ENCODE measurements at regions of chr6 and their contacts with region 1.

Region 1: GRCh38 chr6:125995972-125996580 is 9.7 kb downstream of the TRMT11 start:
- DNase-seq: peak; percentile 81
- ATAC-seq: peak; percentile 95
- H3K4me3 Mint-ChIP-seq: peak overlapping the region; percentile 47
- H3K27ac Mint-ChIP-seq: no peak overlapping the region
- H3K4me1 Mint-ChIP-seq: peaks cover 29% of the 10 kb centered on the region
- H3K27me3 Mint-ChIP-seq: no peaks in the 10 kb centered on the region

Region 2: GRCh38 chr6:126170978-126171382 is 174.9 kb after region 1 on chr6:
- CTCF ChIA-PET with region 1: interaction called, 3 read pairs
- POLR2A ChIA-PET with region 1: no interaction called
- intact Hi-C with region 1: loop called (anchors 2 kb)
- DNase-seq: peak; percentile 44
- ATAC-seq: peak; percentile 65
- H3K4me3 Mint-ChIP-seq: no peak overlapping the region
- H3K27ac Mint-ChIP-seq: no peak overlapping the region
- H3K4me1 Mint-ChIP-seq: peaks cover 4% of the 10 kb centered on the region
- H3K27me3 Mint-ChIP-seq: no peaks in the 10 kb centered on the region

Region 3: DNA sequence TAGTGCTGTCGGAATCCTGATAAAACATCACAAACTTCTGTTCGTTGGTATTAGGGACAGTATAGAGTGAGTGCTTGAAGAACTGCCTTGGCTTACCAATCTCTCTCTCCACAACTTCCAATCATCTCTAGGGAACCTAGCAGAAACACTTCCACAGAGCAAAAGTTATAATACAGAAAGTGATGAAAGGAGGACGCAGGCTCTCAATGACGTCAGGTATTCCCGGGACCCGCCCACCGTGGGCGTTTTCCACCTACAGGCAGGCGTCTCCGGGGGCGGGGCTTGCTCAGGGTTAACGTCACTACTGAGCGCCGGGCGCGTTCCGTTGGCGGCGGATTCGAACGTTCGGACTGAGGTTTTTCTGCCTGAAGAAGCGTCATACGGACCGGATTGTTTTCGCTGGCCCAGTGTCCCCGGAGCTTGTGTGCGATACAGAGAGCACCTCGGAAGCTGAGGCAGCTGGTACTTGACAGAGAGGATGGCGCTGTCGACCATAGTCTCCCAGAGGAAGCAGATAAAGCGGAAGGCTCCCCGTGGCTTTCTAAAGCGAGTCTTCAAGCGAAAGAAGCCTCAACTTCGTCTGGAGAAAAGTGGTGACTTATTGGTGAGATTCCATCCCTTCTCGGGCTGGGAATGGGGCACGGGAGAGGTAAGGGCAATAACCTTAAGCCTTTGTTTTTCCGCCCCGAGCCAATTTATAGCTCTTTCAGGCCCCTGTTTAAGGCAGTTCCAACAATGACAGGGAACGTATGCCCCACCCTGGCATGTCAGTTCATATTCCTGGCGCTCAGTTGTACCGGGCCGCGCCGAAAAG is 343.9 kb after region 1 on chr6 and contains the start of gene CENPW:
- CTCF ChIA-PET with region 1: no interaction called
- POLR2A ChIA-PET with region 1: no interaction called
- intact Hi-C with region 1: loop called in 1 of 2 experiments (anchors 10 kb)
- DNase-seq: peak; percentile 97
- ATAC-seq: peak; percentile 92
- H3K4me3 Mint-ChIP-seq: no peak within 1 kb of the TSS
- H3K27ac Mint-ChIP-seq: no peak within 1 kb of the TSS
- H3K4me1 Mint-ChIP-seq: peaks cover 13% of the 10 kb centered on the region
- H3K27me3 Mint-ChIP-seq: no peaks in the 10 kb centered on the region
- total RNA-seq, gene CENPW: 44.1 to 63.6 TPM

Region 4: DNA sequence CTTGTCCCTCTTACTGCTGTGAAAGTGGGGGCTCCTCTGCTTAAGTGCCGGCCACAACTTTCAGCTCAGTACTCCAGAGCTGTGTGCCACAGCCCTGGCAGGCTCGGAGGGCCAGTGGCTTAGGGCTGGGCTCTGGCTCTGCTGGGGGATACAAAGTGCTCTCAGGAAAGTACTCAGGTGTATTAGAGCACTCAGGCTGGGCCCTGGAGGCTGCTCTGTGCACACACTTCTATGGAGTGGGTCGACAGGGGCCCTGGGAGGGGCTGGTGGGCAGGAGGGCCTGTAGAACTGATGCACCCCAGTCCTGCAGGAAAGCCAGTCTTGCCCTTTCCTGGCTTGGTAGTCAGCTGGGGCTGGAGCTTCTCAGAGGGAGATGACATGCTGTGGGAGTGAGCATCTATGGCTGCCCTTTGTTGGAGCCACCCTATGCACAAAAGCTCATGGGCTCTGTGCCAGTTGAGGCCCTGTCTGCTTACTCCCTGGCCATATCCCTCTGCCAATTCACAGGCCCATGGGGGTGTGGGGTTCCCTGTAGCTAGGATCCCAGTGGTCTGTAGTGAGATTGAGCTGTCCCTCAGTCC is 365.8 kb after region 1 on chr6:
- CTCF ChIA-PET with region 1: no interaction called
- POLR2A ChIA-PET with region 1: no interaction called
- intact Hi-C with region 1: no loop called
- DNase-seq: no peak
- ATAC-seq: no peak
- H3K4me3 Mint-ChIP-seq: no peak overlapping the region
- H3K27ac Mint-ChIP-seq: no peak overlapping the region
- H3K4me1 Mint-ChIP-seq: no peaks in the 10 kb centered on the region
- H3K27me3 Mint-ChIP-seq: no peaks in the 10 kb centered on the region

Region 5: GRCh38 chr6:126422912-126423311 is 426.8 kb after region 1 on chr6:
- CTCF ChIA-PET with region 1: interaction called, 5 read pairs
- POLR2A ChIA-PET with region 1: no interaction called
- intact Hi-C with region 1: loop called (anchors 5 to 10 kb)
- DNase-seq: no peak
- ATAC-seq: no peak
- H3K4me3 Mint-ChIP-seq: no peak overlapping the region
- H3K27ac Mint-ChIP-seq: no peak overlapping the region
- H3K4me1 Mint-ChIP-seq: no peaks in the 10 kb centered on the region
- H3K27me3 Mint-ChIP-seq: no peaks in the 10 kb centered on the region

Region 6: DNA sequence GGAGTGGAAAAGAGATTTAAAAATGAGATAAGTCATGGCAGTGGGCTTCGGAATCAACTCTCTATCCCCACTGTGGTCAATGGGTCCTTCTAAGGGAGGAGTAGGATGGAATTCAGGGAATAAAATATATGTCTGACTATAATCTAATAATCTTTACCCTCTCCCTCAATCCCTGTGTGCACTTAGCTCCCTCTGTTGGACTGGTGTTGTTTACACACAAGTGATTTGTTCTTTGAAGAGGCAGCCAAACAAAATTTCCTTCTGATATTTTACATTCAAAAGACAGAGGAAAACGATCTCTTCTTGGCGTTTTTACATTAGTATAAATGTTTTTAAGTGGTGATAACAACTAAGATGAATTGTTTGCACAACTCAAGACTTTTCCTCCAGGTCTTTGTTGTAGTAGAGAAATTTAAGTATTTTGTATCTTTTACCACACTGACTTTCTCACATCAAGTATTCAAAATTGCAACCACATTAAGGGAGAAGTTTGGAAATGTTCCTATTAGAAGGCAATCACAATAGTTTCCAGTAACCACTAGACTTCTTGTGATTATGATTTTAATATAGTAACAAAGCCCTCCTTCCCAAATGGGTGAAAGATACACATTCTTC is 661.6 kb after region 1 on chr6:
- CTCF ChIA-PET with region 1: no interaction called
- POLR2A ChIA-PET with region 1: no interaction called
- intact Hi-C with region 1: loop called in 1 of 2 experiments (anchors 2 kb)
- DNase-seq: no peak
- ATAC-seq: no peak
- H3K4me3 Mint-ChIP-seq: no peak overlapping the region
- H3K27ac Mint-ChIP-seq: no peak overlapping the region
- H3K4me1 Mint-ChIP-seq: no peaks in the 10 kb centered on the region
- H3K27me3 Mint-ChIP-seq: no peaks in the 10 kb centered on the region

Region 7: GRCh38 chr6:127120787-127121636 is 1124.9 kb after region 1 on chr6:
- CTCF ChIA-PET with region 1: interaction called, 5 read pairs
- POLR2A ChIA-PET with region 1: no interaction called
- intact Hi-C with region 1: loop called (anchors 2 kb)
- DNase-seq: peak; percentile 89
- ATAC-seq: peak; percentile 90
- H3K4me3 Mint-ChIP-seq: no peak overlapping the region
- H3K27ac Mint-ChIP-seq: no peak overlapping the region
- H3K4me1 Mint-ChIP-seq: peaks cover 19% of the 10 kb centered on the region
- H3K27me3 Mint-ChIP-seq: peaks cover 48% of the 10 kb centered on the region

Region 8: GRCh38 chr6:127186889-127187288 is 1190.8 kb after region 1 on chr6:
- CTCF ChIA-PET with region 1: no interaction called
- POLR2A ChIA-PET with region 1: no interaction called
- intact Hi-C with region 1: loop called in 1 of 2 experiments (anchors 1 kb)
- DNase-seq: peak; percentile 87
- ATAC-seq: peak; percentile 72
- H3K4me3 Mint-ChIP-seq: no peak overlapping the region
- H3K27ac Mint-ChIP-seq: no peak overlapping the region
- H3K4me1 Mint-ChIP-seq: no peaks in the 10 kb centered on the region
- H3K27me3 Mint-ChIP-seq: peaks cover 5% of the 10 kb centered on the region